K562 (cell line): ENCODE measurements at regions of chr4 and their contacts with region 1.

Region 1: GRCh38 chr4:139501927-139502899 is 48.3 kb downstream of the RAB33B start:
- DNase-seq: no peak
- ATAC-seq: no peak; the same call in 2 of the 3 replicates
- H3K4me3 ChIP-seq: no peak overlapping the region
- H3K27ac ChIP-seq: no peak overlapping the region
- H3K4me1 ChIP-seq: no peaks in the 10 kb centered on the region; a peak in 1 of 5 replicates
- H3K27me3 ChIP-seq: peaks cover 17 to 23% of the 10 kb centered on the region in 2 experiments
- CTCF ChIP-seq: no peak
- EP300 ChIP-seq: no peak
- POLR2A ChIP-seq: no peak
- RAD21 ChIP-seq: no peak

Region 2: GRCh38 chr4:139403462-139403861 is 98.8 kb before region 1 on chr4:
- CTCF ChIA-PET with region 1: no interaction called
- POLR2A ChIA-PET with region 1: no interaction called
- in situ Hi-C with region 1: no loop called
- intact Hi-C with region 1: loop called (anchors 5 kb)
- DNase-seq: no peak
- ATAC-seq: peak; percentile 54
- H3K4me3 ChIP-seq: no peak overlapping the region
- H3K27ac ChIP-seq: no peak overlapping the region
- H3K4me1 ChIP-seq: no peaks in the 10 kb centered on the region
- H3K27me3 ChIP-seq: no peaks in the 10 kb centered on the region
- CTCF ChIP-seq: peak in 1 of 3 experiments; percentile 41; a peak in 2 of 6 replicates
- EP300 ChIP-seq: no peak
- POLR2A ChIP-seq: no peak
- RAD21 ChIP-seq: no peak; a peak in 1 of 4 replicates

Region 3: GRCh38 chr4:139530833-139531427 is 28.7 kb after region 1 on chr4:
- CTCF ChIA-PET with region 1: interaction called, 3 read pairs
- POLR2A ChIA-PET with region 1: no interaction called
- in situ Hi-C with region 1: no loop called
- intact Hi-C with region 1: loop called (anchors 2 kb)
- DNase-seq: peak; percentile 61 to 75 (median 68)
- ATAC-seq: peak; percentile 95
- H3K4me3 ChIP-seq: no peak overlapping the region
- H3K27ac ChIP-seq: no peak overlapping the region
- H3K4me1 ChIP-seq: no peaks in the 10 kb centered on the region
- H3K27me3 ChIP-seq: peaks cover 2 to 9% of the 10 kb centered on the region in 2 experiments; a peak in 2 of 5 replicates
- CTCF ChIP-seq: peak; percentile 81 to 92 (median 81)
- EP300 ChIP-seq: no peak
- POLR2A ChIP-seq: no peak
- RAD21 ChIP-seq: peak; percentile 59 to 69

Region 4: GRCh38 chr4:139651282-139652194 is 149.3 kb after region 1 on chr4:
- CTCF ChIA-PET with region 1: no interaction called
- POLR2A ChIA-PET with region 1: no interaction called
- in situ Hi-C with region 1: no loop called
- intact Hi-C with region 1: loop called (anchors 5 kb)
- DNase-seq: peak; percentile 67 to 91 (median 72)
- ATAC-seq: peak; percentile 91
- H3K4me3 ChIP-seq: no peak overlapping the region
- H3K27ac ChIP-seq: no peak overlapping the region
- H3K4me1 ChIP-seq: peaks cover 0 to 3% of the 10 kb centered on the region in 2 experiments; a peak in 2 of 5 replicates
- H3K27me3 ChIP-seq: peaks cover 7 to 18% of the 10 kb centered on the region in 2 experiments; a peak in 4 of 5 replicates
- CTCF ChIP-seq: peak; percentile 87 to 93 (median 89)
- EP300 ChIP-seq: 0 out of 2 replicates have a peak, but pooled peaks have one; percentile 13
- POLR2A ChIP-seq: no peak
- RAD21 ChIP-seq: peak; percentile 80 to 85